Naive thymus-derived CD4-positive, alpha-beta T cell (primary cell): ENCODE measurements at regions of chr13 and their contacts with region 1.

Region 1: GRCh38 chr13:49936085-49936940 is at the start of gene SPRYD7:
- DNase-seq: peak; percentile 82 to 99 (median 90)
- ATAC-seq: peak; percentile 98
- H3K4me3 ChIP-seq: peak within 1 kb of the TSS; percentile 99
- H3K4me3 Mint-ChIP-seq: peak within 1 kb of the TSS; percentile 86 to 99 (median 96)
- H3K27ac ChIP-seq: peak within 1 kb of the TSS; percentile 69
- H3K27ac Mint-ChIP-seq: peak within 1 kb of the TSS; percentile 74 to 95 (median 86)
- H3K4me1 ChIP-seq: peaks cover 10 to 14% of the 10 kb centered on the region in 2 donors
- H3K4me1 Mint-ChIP-seq: peaks cover 12 to 28% (median 15%) of the 10 kb centered on the region in 7 donors
- H3K27me3 ChIP-seq: no peaks in the 10 kb centered on the region
- H3K27me3 Mint-ChIP-seq: peaks cover 0 to 33% (median 0%) of the 10 kb centered on the region in 5 donors
- total RNA-seq, gene SPRYD7: 1.7 to 3.1 (median 2.3) TPM

Region 2: GRCh38 chr13:49247643-49248621 is 688.4 kb before region 1 on chr13 and contains the start of gene CDADC1:
- CTCF ChIA-PET with region 1: no interaction called
- POLR2A ChIA-PET with region 1: no interaction called
- intact Hi-C with region 1: loop called in 1 of 2 experiments (anchors 5 kb)
- DNase-seq: peak; percentile 44 to 93 (median 54)
- ATAC-seq: peak; percentile 90
- H3K4me3 ChIP-seq: peak within 1 kb of the TSS; percentile 93
- H3K4me3 Mint-ChIP-seq: peak within 1 kb of the TSS; percentile 94 to 99 (median 98)
- H3K27ac ChIP-seq: peak within 1 kb of the TSS; percentile 75
- H3K27ac Mint-ChIP-seq: peak within 1 kb of the TSS; percentile 92 to 97 (median 95)
- H3K4me1 ChIP-seq: peaks cover 1 to 3% of the 10 kb centered on the region in 2 donors
- H3K4me1 Mint-ChIP-seq: peaks cover 16 to 59% (median 53%) of the 10 kb centered on the region in 7 donors
- H3K27me3 ChIP-seq: no peaks in the 10 kb centered on the region
- H3K27me3 Mint-ChIP-seq: peaks cover 0 to 25% (median 0%) of the 10 kb centered on the region in 5 donors
- total RNA-seq, gene CDADC1: 10.7 to 21.3 (median 14.5) TPM

Region 3: GRCh38 chr13:49690992-49691886 is 245.1 kb before region 1 on chr13 and contains the start of gene EBPL:
- CTCF ChIA-PET with region 1: no interaction called
- POLR2A ChIA-PET with region 1: no interaction called
- intact Hi-C with region 1: loop called (anchors 2 to 10 kb)
- DNase-seq: peak; percentile 57 to 91 (median 73)
- ATAC-seq: peak; percentile 97
- H3K4me3 ChIP-seq: peak within 1 kb of the TSS; percentile 67
- H3K4me3 Mint-ChIP-seq: peak within 1 kb of the TSS; percentile 88 to 96 (median 92)
- H3K27ac ChIP-seq: peak within 1 kb of the TSS; percentile 56
- H3K27ac Mint-ChIP-seq: peak within 1 kb of the TSS; percentile 73 to 91 (median 81)
- H3K4me1 ChIP-seq: peaks cover 0 to 17% of the 10 kb centered on the region in 2 donors
- H3K4me1 Mint-ChIP-seq: peaks cover 21 to 58% (median 45%) of the 10 kb centered on the region in 7 donors
- H3K27me3 ChIP-seq: no peaks in the 10 kb centered on the region
- H3K27me3 Mint-ChIP-seq: no peaks in the 10 kb centered on the region
- total RNA-seq, gene EBPL: 13.3 to 34.9 (median 20.4) TPM

Region 4: GRCh38 chr13:49840266-49840665 is 96.0 kb before region 1 on chr13:
- CTCF ChIA-PET with region 1: no interaction called
- POLR2A ChIA-PET with region 1: no interaction called
- intact Hi-C with region 1: loop called in 1 of 2 experiments (anchors 5 kb)
- DNase-seq: no peak
- ATAC-seq: no peak
- H3K4me3 ChIP-seq: no peak overlapping the region
- H3K4me3 Mint-ChIP-seq: no peak overlapping the region
- H3K27ac ChIP-seq: no peak overlapping the region
- H3K27ac Mint-ChIP-seq: no peak overlapping the region
- H3K4me1 ChIP-seq: no peaks in the 10 kb centered on the region
- H3K4me1 Mint-ChIP-seq: no peaks in the 10 kb centered on the region
- H3K27me3 ChIP-seq: no peaks in the 10 kb centered on the region
- H3K27me3 Mint-ChIP-seq: no peaks in the 10 kb centered on the region

Region 5: GRCh38 chr13:50365408-50366391 is 429.4 kb after region 1 on chr13:
- CTCF ChIA-PET with region 1: no interaction called
- POLR2A ChIA-PET with region 1: no interaction called
- intact Hi-C with region 1: loop called in 1 of 2 experiments (anchors 1 kb)
- DNase-seq: peak in 4 of 9 donors; percentile 9 to 33 (median 16)
- ATAC-seq: peak; percentile 71
- H3K4me3 ChIP-seq: peak overlapping the region; percentile 7
- H3K4me3 Mint-ChIP-seq: peak overlapping the region in 9 of 10 donors; percentile 7 to 78 (median 68)
- H3K27ac ChIP-seq: peak overlapping the region; percentile 53
- H3K27ac Mint-ChIP-seq: peak overlapping the region; percentile 51 to 88 (median 82)
- H3K4me1 ChIP-seq: peaks cover 6 to 28% of the 10 kb centered on the region in 2 donors
- H3K4me1 Mint-ChIP-seq: peaks cover 14 to 39% (median 25%) of the 10 kb centered on the region in 7 donors
- H3K27me3 ChIP-seq: no peaks in the 10 kb centered on the region
- H3K27me3 Mint-ChIP-seq: peaks cover 0 to 53% (median 5%) of the 10 kb centered on the region in 5 donors

Region 6: GRCh38 chr13:50893211-50893852 is 957.0 kb after region 1 on chr13:
- CTCF ChIA-PET with region 1: no interaction called
- POLR2A ChIA-PET with region 1: interaction called, 3 read pairs
- intact Hi-C with region 1: loop called in 1 of 2 experiments (anchors 1 kb)
- DNase-seq: peak in 7 of 9 donors; percentile 34 to 68 (median 55)
- ATAC-seq: peak; percentile 91
- H3K4me3 ChIP-seq: peak overlapping the region; percentile 30
- H3K4me3 Mint-ChIP-seq: peak overlapping the region; percentile 67 to 88 (median 82)
- H3K27ac ChIP-seq: peak overlapping the region; percentile 69
- H3K27ac Mint-ChIP-seq: peak overlapping the region; percentile 82 to 98 (median 95)
- H3K4me1 ChIP-seq: peaks cover 16 to 27% of the 10 kb centered on the region in 2 donors
- H3K4me1 Mint-ChIP-seq: peaks cover 26 to 50% (median 47%) of the 10 kb centered on the region in 7 donors
- H3K27me3 ChIP-seq: no peaks in the 10 kb centered on the region
- H3K27me3 Mint-ChIP-seq: no peaks in the 10 kb centered on the region